Activated naive CD4-positive, alpha-beta T cell treated with anti-CD3 and anti-CD28 coated beads, Interleukin-2, amount 10 ng/mL, durations not matched to agents 7 days and 5 days (primary cell): ENCODE measurements at regions of chr6 and their contacts with region 1.

Region 1: GRCh38 chr6:41683510-41684310 is 45.4 kb downstream of the MDFI start:
- DNase-seq: peak; percentile 84
- H3K4me3 Mint-ChIP-seq: peak overlapping the region; percentile 65
- H3K27ac Mint-ChIP-seq: peak overlapping the region; percentile 70
- H3K4me1 Mint-ChIP-seq: peaks cover 19% of the 10 kb centered on the region
- H3K27me3 Mint-ChIP-seq: peaks cover 33% of the 10 kb centered on the region

Region 2: GRCh38 chr6:41584668-41585205 is 99.0 kb before region 1 on chr6:
- CTCF ChIA-PET with region 1: no interaction called
- DNase-seq: no peak
- H3K4me3 Mint-ChIP-seq: no peak overlapping the region
- H3K27ac Mint-ChIP-seq: no peak overlapping the region
- H3K4me1 Mint-ChIP-seq: no peaks in the 10 kb centered on the region
- H3K27me3 Mint-ChIP-seq: peaks cover 3% of the 10 kb centered on the region

Region 3: GRCh38 chr6:41602864-41603608 is 80.7 kb before region 1 on chr6:
- CTCF ChIA-PET with region 1: interaction called, 41 read pairs
- DNase-seq: peak; percentile 83
- H3K4me3 Mint-ChIP-seq: no peak overlapping the region
- H3K27ac Mint-ChIP-seq: no peak overlapping the region
- H3K4me1 Mint-ChIP-seq: peaks cover 2% of the 10 kb centered on the region
- H3K27me3 Mint-ChIP-seq: peaks cover 29% of the 10 kb centered on the region

Region 4: GRCh38 chr6:41694815-41695526 is 11.3 kb after region 1 on chr6:
- CTCF ChIA-PET with region 1: interaction called, 10 read pairs
- DNase-seq: no peak
- H3K4me3 Mint-ChIP-seq: no peak overlapping the region
- H3K27ac Mint-ChIP-seq: no peak overlapping the region
- H3K4me1 Mint-ChIP-seq: no peaks in the 10 kb centered on the region
- H3K27me3 Mint-ChIP-seq: peaks cover 5% of the 10 kb centered on the region

Region 5: GRCh38 chr6:41705996-41706835 is 22.5 kb after region 1 on chr6:
- CTCF ChIA-PET with region 1: interaction called, 12 read pairs
- DNase-seq: peak; percentile 76
- H3K4me3 Mint-ChIP-seq: peak overlapping the region; percentile 42
- H3K27ac Mint-ChIP-seq: peak overlapping the region; percentile 80
- H3K4me1 Mint-ChIP-seq: peaks cover 46% of the 10 kb centered on the region
- H3K27me3 Mint-ChIP-seq: no peaks in the 10 kb centered on the region

Region 6: GRCh38 chr6:41878246-41878645 is 194.5 kb after region 1 on chr6:
- CTCF ChIA-PET with region 1: no interaction called
- DNase-seq: no peak
- H3K4me3 Mint-ChIP-seq: no peak overlapping the region
- H3K27ac Mint-ChIP-seq: no peak overlapping the region
- H3K4me1 Mint-ChIP-seq: no peaks in the 10 kb centered on the region
- H3K27me3 Mint-ChIP-seq: no peaks in the 10 kb centered on the region